ENCODE measurements at regions of chr17 and their contacts with region 1.

Region 1: DNA sequence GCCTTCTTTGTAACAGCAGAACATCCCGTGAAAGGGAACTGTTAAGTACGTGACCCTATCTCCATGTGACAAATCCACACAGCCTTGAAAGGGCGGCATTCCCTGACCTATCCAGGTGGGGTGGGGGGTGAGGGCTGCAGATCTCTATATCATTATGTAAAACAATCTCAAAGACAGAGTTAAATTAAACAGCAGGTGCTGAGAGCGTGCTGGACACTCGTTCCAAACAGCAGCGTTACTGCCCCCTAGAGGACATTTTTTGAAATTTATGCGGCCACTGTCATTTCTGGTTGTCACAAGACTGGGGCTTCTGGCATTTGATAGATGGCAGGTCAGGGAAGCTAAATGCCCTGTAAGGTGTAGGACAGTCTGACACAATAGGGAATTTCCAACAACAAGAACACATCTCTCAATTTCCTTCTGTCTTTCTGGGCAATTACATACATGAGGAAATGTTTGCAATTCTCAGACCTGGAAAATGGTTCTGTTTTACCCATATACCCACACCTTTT is 6.7 kb upstream of the SLC25A39 start:
- DNase-seq: peak; percentile 84

Region 2: DNA sequence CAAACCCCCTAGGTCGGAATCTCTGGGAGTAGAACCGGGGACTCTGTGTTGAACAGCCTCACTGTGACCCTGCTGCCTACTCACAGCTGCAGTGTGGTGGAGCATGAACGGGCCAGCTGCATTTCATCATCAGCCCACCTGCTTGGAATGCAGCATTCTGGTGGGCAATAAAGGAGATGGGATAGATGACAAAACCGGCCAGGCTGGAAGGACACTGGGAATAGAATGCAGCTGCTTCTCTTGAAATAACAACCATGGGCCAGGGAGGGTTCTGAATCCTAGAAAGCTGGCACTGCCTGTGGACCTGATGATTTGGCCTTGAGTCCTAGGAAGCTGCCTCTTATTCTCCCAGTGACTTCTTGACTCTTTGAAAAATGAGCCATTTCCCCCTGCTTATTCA is 527.5 kb before region 1 on chr17:
- intact Hi-C with region 1: no loop called
- DNase-seq: no peak

Region 3: DNA sequence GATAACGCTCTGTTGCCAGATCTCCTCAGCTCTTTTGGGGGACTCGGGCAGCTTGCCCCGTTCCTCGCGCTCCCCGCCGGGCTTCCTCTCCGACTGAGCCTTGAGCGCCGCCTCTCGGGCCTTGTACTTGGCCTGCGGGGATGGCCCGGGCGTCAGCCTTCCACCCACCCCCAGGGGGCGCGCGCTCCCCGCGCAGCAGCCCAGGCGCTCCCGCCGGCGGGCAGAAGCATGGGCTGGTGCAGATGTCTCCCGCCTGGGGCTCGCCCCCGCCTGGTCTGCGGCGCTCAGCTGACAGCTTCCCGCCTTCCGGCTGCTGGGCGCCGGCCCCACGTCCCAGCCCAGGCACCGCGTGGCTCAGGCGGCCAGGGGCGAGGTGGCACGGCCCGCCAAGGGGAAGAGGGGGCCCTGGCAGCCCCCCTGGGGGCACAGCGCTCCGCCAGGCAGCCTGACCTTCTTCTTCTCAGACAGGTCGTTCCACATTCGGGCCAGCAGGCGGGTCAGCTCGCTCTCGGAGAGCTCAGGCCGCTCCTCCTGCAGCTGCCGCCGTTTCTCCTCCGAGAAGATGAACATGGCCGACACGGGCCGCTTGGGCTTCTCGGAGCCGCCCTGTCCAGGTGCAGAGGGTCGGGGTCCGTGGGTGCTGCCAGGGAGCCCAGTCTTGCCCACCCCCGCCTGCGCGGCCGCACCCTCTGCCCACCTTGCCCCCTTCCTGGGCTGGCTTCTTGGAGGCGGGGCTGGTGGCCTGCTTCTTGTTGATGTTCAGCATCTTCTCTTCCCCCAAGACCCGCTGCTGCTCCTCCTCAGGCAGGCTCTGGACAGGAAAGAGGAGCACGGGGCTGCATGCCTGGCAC is 120.7 kb before region 1 on chr17:
- intact Hi-C with region 1: loop called (anchors 2 kb)
- DNase-seq: peak; percentile 96

Region 4: DNA sequence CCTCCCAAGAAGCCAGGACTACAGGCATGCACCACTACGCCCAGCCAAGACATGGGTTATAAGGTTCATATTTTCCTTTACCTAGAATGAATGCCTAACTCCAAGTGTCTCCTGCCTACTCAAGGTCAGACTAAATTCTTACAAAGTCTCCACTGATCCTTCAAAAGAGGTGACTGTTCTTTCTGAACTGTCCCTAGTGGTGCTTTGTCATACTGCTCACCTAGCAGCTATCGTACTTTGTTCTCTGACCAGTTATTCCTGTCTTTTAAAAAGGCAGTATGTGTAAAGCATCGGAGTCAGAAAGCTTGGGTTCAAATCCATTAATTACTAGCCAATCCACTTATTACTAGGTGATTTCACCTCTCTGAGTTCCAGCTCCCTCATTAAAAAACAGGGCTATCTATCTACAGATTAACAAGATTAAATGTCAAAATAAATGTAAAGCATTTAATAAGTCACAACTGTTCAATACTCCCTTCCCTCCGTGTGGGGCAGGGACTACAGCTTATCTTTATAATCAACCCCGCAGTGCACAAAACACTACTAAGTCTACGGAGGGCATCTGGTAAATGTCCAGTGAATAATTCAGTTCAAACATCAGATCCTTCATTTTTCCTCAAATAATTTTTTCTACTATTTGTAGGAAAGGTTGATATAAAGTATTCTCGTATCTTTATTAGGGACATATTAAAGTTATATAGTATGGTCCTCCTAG is 78.2 kb after region 1 on chr17:
- intact Hi-C with region 1: no loop called
- DNase-seq: no peak

Region 5: GRCh38 chr17:44444735-44445105 is 113.4 kb after region 1 on chr17:
- intact Hi-C with region 1: no loop called
- DNase-seq: no peak

Region 6: DNA sequence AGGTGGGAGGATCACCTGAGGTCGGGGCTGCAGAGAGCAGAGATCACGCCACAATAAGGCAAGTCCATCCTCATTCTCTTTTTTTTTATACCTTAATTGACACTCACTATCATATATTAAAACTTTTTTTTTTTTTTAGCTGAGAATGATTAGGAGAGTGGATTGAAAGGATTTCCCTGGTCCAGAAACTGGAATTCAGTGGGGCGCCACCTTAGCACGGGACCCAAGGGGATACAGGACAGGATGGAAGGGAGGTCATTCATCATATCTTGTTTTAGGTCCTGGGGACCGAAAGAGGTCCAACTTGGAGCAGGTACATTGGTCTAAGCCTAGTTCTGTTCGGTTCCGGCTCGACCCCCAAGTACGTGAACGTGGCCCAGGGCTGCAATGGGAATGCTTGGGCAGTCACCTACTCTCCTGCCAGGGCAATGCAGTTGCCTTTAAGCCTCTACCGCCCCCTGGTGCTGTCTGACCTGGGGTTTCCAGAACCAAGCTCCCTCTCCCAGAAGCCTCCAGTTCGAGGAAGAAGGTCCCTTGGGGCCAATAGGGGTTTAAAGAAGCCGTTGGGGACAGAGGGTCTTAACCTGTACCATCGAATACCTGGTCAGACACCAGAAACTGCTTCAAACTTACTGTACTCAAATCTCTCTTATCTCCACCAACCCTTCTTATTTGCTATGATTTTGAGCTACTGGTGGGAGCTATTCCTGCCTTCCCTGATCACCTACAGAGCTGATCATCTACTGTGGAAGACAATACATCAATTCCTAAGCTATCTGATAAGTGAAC is 191.8 kb after region 1 on chr17:
- intact Hi-C with region 1: no loop called
- DNase-seq: peak; percentile 77